WTC11 (cell line): ENCODE measurements at regions of chr2 and their contacts with region 1.

Region 1: DNA sequence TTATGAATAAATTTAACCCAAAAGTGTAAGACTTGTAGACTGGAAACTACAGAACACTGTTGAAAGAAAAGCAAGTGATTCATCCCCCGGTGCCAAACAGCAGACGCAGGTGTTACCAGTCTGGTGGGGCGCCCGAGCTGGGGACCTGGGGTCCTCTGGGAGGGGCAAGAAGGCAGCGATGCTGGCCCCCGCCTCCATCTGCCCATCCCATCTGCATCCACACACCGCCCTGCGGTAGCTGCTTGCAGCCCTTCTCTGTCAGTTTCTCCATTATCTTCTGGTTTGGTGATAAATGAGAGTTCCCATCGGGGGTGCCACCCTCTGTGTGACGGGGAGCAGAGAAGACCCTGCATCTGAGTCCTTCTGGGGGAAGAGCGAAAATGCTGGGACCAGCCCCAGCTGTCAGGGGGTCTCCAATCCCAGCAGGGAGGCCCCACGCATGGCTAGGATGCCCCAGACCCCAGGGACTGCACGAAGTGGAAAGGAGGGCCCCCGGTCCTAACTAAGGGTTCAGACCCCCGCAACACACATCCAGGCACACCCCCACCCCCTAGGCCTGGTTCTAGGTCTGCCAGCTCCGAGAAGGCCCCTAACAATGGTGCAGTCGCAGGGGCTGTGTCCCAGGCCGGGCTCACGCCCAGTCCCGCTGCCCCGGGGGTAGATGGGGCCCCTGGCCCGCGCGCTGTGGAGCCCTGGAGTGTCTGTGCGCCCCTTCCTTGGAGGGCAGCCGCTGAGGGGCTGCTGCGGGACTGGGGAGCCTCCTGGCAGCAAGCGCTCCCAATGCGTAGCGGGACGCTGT is 686 bp upstream of the RGPD8 start:
- DNase-seq: peak; percentile 27
- ATAC-seq: no peak
- H3K4me3 Mint-ChIP-seq: 0 out of 2 replicates have a peak overlapping the region, but pooled peaks have one; percentile 12
- H3K27ac Mint-ChIP-seq: no peak overlapping the region
- H3K4me1 Mint-ChIP-seq: peaks cover 3% of the 10 kb centered on the region; the same call in 1 of the 2 replicates
- H3K27me3 Mint-ChIP-seq: peaks cover 10% of the 10 kb centered on the region
- CTCF ChIP-seq: no peak

Region 2: GRCh38 chr2:112121682-112122254 is 312.4 kb before region 1 on chr2:
- CTCF ChIA-PET with region 1: interaction called, 15 read pairs
- POLR2A ChIA-PET with region 1: interaction called, 3 read pairs
- DNase-seq: no peak
- ATAC-seq: no peak
- H3K4me3 Mint-ChIP-seq: no peak overlapping the region
- H3K27ac Mint-ChIP-seq: no peak overlapping the region
- H3K4me1 Mint-ChIP-seq: no peaks in the 10 kb centered on the region
- H3K27me3 Mint-ChIP-seq: no peaks in the 10 kb centered on the region; the same call in 1 of the 2 replicates
- CTCF ChIP-seq: 0 out of 2 replicates have a peak, but pooled peaks have one; percentile 39

Region 3: GRCh38 chr2:112626604-112627059 is 192.5 kb after region 1 on chr2:
- CTCF ChIA-PET with region 1: no interaction called
- POLR2A ChIA-PET with region 1: no interaction called
- DNase-seq: peak; percentile 55
- ATAC-seq: peak; percentile 81
- H3K4me3 Mint-ChIP-seq: no peak overlapping the region
- H3K27ac Mint-ChIP-seq: no peak overlapping the region
- H3K4me1 Mint-ChIP-seq: peaks cover 31% of the 10 kb centered on the region
- H3K27me3 Mint-ChIP-seq: no peaks in the 10 kb centered on the region; the same call in 1 of the 2 replicates
- CTCF ChIP-seq: peak; percentile 45; the same call in 1 of the 2 replicates